OCI-LY7 (cell line): ENCODE measurements at regions of chr2 and their contacts with region 1.

Region 1: GRCh38 chr2:200811336-200812121 is at the start of gene BZW1:
- DNase-seq: peak; percentile 98
- H3K4me3 ChIP-seq: peak within 1 kb of the TSS; percentile 93
- H3K27ac ChIP-seq: peak within 1 kb of the TSS; percentile 78
- H3K4me1 ChIP-seq: peaks cover 28% of the 10 kb centered on the region
- CTCF ChIP-seq: no peak
- total RNA-seq, gene BZW1: 177 and 180 TPM in 2 replicates

Region 2: GRCh38 chr2:200525882-200526651 is 285.5 kb before region 1 on chr2 and contains the start of gene SGO2:
- CTCF ChIA-PET with region 1: no interaction called
- POLR2A ChIA-PET with region 1: no interaction called
- intact Hi-C with region 1: loop called (anchors 5 kb)
- DNase-seq: peak; percentile 97
- H3K4me3 ChIP-seq: peak within 1 kb of the TSS; percentile 91
- H3K27ac ChIP-seq: peak within 1 kb of the TSS; percentile 67
- H3K4me1 ChIP-seq: peaks cover 28% of the 10 kb centered on the region
- CTCF ChIP-seq: no peak
- total RNA-seq, gene SGO2: 24.6 and 29.3 TPM in 2 replicates

Region 3: DNA sequence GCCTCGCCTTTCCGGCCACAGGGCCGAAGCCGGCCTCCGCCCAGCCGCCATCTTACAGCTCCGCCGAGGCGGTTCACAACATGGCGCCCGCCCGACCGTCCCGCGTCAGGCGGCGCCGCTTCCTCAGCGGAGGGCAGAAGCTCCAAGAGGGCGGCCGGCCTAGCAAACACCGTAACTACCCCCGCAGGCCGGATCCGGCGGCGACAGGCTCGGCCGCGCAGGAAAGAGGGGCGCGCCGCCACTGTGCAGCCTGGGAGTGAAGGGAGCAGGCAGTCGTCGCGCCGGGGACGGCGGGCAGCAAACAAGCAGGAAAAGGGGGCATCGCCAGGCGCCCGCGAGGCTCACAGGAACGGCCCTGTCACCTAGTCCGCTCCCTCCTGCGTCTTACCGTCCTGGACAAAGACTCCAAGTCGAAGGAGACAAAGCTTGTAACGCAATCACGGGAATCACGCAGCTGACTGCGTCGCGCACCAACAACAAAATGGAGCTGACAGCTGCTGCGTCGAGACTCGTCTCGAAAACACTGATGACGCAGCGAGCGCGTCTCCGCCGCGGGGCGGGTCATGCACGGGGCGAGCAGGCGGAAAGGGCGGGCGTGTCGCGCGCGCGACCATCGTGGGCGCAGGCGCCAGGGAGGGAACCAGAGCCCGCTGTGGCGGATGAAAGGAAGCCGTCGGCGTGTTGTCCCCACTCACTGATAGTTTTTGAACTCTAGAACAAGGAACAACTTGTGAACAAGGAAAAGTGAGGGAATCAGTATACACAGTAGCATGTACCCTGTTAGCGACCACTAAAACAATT is 52.8 kb after region 1 on chr2 and contains the start of gene CLK1:
- CTCF ChIA-PET with region 1: no interaction called
- POLR2A ChIA-PET with region 1: interaction called, 4 read pairs
- intact Hi-C with region 1: loop called (anchors 2 kb)
- DNase-seq: peak; percentile 94
- H3K4me3 ChIP-seq: peak within 1 kb of the TSS; percentile 82
- H3K27ac ChIP-seq: peak within 1 kb of the TSS; percentile 89
- H3K4me1 ChIP-seq: peaks cover 30% of the 10 kb centered on the region
- CTCF ChIP-seq: no peak
- total RNA-seq, gene CLK1: 74.9 and 80.1 TPM in 2 replicates

Region 4: DNA sequence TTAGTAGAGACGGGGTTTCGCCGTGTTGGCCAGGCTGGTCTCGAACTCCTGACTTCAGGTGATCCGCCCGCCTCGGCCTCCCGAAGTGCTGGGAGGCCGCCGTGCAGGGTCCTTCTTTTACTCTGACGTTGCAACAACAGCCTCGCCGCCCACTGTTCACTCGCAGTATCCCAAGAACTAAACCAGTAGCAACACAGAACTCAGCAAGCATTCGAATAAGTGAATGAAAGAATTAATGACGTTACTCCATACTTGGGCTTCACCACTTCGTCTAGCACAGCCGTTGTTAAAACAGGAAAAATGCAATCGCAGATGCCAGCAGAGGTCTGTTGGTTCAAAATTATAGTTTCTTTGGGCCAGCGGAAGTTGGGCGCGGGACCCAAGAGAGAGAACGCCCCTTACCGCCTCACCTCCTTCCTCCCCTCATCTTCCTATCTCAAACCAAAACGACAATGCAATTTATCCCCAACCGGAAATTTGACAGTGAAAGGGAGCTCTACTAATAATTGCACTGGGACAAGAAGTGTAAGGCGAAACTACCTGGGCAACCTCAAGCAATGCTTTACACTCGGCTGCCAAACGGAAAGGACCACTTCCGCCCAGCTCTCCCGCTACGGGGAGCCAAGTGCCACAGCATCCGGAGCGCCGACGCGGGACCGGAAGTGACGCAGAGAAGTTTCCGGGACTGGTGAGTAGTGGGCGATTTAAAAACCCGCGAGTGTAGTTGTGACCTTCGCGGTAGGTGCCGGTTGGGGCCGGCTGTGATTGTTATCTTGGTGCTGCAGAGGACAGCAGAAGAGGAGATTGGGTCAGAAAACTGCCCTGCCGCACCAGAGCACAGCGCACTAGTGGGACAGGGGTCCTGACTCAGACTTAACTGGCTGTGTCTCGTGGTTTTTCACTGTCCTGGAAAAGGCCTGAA is 77.4 kb after region 1 on chr2 and contains the starts of genes NIF3L1 and PPIL3:
- CTCF ChIA-PET with region 1: no interaction called
- POLR2A ChIA-PET with region 1: interaction called, 6 read pairs
- intact Hi-C with region 1: loop called (anchors 1 kb)
- DNase-seq: peak; percentile 99
- H3K4me3 ChIP-seq: peak within 1 kb of the TSS; percentile 90
- H3K27ac ChIP-seq: peak within 1 kb of the TSS; percentile 98
- H3K4me1 ChIP-seq: peaks cover 52% of the 10 kb centered on the region
- CTCF ChIP-seq: peak; percentile 39; the same call in 1 of the 2 replicates
- total RNA-seq, gene NIF3L1: 37.5 and 68.4 TPM in 2 replicates
- total RNA-seq, gene PPIL3: 49.4 and 54.4 TPM in 2 replicates

Region 5: GRCh38 chr2:201064797-201065329 is 253.3 kb after region 1 on chr2:
- CTCF ChIA-PET with region 1: no interaction called
- POLR2A ChIA-PET with region 1: no interaction called
- intact Hi-C with region 1: loop called (anchors 5 kb)
- DNase-seq: no peak
- H3K4me3 ChIP-seq: no peak overlapping the region
- H3K27ac ChIP-seq: no peak overlapping the region
- H3K4me1 ChIP-seq: peaks cover 36% of the 10 kb centered on the region
- CTCF ChIP-seq: no peak

Region 6: DNA sequence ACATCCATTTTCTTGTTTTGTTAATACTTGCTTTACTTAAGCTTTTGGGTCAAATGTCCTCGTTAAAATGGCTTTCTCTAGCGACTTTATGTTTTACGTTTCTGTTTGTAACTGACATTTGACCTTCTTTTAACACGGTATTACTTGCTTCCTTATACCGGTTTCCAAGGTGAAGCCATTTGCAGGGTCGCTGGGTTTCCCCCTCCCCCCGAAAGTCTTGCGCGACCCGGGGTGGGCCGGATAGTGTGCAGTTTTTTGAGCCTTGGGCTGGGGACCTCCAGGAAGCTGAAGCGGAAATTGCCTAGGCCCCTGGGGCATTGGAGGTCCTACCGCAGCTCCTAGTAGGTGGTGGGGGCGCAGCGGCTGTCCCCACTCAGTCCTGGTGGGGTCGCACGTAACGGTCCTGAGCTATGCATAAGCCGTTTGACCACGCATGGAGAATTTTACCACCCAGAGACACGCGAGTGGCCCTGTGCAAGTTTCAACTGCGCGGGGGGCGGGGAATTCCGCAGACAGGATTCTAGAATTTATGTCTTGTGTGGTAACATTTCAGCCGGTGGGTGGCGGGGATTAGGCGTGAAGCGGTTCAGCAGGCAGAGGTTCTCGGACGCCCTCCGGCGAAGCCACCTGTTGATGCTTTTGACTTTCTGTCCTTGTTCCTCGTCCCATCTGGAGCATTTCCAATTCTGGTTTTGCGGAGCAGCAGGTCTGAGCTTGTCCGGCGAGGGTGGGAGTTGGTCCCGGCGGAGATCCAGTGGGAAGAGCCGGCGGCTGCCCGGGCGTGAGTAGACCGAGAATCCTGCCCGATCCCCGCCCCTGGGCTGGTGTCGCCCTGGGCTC is 306.8 kb after region 1 on chr2:
- CTCF ChIA-PET with region 1: no interaction called
- POLR2A ChIA-PET with region 1: no interaction called
- intact Hi-C with region 1: loop called (anchors 2 kb)
- DNase-seq: peak; percentile 91
- H3K4me3 ChIP-seq: peak overlapping the region; percentile 81
- H3K27ac ChIP-seq: peak overlapping the region; percentile 95
- H3K4me1 ChIP-seq: peaks cover 43% of the 10 kb centered on the region
- CTCF ChIP-seq: peak; percentile 85